OCI-LY7 (cell line): ENCODE measurements at regions of chr16 and their contacts with region 1.

Region 1: DNA sequence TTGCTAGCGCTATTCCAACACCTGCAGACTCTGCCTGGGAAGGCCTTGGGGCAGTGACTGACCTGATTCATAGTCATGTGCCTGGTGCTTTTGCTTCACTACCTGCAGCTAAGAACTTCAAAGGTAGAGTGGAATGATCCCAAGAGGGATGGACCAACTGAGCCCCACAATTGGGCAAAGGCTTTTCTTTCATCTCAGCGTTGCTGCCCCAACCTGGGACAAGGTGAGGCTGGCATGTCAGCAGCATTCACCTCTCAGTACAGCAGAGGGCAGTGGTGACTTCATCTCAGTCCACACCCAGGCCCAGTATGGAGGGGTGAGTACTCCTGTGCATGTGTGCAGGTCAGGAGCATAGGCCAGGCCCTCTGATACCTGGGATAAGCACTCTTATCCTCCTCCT is 149.6 kb upstream of the GNAO1 start:
- DNase-seq: peak; percentile 10
- H3K4me3 ChIP-seq: no peak overlapping the region
- H3K27ac ChIP-seq: no peak overlapping the region
- H3K4me1 ChIP-seq: no peaks in the 10 kb centered on the region
- CTCF ChIP-seq: peak; percentile 66

Region 2: GRCh38 chr16:56203052-56203451 is 161.4 kb after region 1 on chr16:
- CTCF ChIA-PET with region 1: no interaction called
- POLR2A ChIA-PET with region 1: no interaction called
- intact Hi-C with region 1: loop called (anchors 5 kb)
- DNase-seq: peak; percentile 32
- H3K4me3 ChIP-seq: no peak overlapping the region
- H3K27ac ChIP-seq: no peak overlapping the region
- H3K4me1 ChIP-seq: no peaks in the 10 kb centered on the region
- CTCF ChIP-seq: peak; percentile 59

Region 3: DNA sequence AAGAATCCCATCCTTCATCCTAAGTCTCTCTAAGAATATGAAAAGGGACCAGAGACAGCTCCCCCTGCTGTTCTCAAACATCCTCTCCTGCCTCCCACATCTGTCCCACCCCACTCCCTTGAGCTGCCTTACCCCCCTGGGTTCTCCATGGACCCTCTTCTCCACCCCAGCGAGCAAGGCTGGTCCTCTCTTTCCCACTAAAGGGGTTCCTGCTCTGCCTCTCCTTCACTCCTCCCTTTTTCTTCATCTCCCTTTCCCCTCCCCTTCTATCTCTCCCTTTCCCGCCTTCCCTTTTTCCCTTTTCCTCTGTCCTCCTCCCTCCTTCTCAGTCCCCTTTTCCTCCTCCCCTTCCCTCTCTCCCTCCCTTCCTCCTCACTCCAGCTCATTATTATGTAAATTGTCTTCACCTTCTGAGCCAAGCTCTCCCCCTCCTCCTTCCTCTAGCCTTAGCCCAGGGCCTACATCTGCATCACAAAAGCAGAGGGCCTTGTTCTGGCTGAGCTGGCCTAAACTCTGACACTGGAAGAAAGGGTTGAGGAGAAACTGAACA is 239.6 kb after region 1 on chr16:
- CTCF ChIA-PET with region 1: no interaction called
- POLR2A ChIA-PET with region 1: no interaction called
- intact Hi-C with region 1: loop called (anchors 10 kb)
- DNase-seq: no peak
- H3K4me3 ChIP-seq: no peak overlapping the region
- H3K27ac ChIP-seq: no peak overlapping the region
- H3K4me1 ChIP-seq: peaks cover 9% of the 10 kb centered on the region
- CTCF ChIP-seq: peak; percentile 60

Region 4: GRCh38 chr16:56317998-56318826 is 276.5 kb after region 1 on chr16:
- CTCF ChIA-PET with region 1: no interaction called
- POLR2A ChIA-PET with region 1: no interaction called
- intact Hi-C with region 1: loop called (anchors 1 kb)
- DNase-seq: peak; percentile 60
- H3K4me3 ChIP-seq: no peak overlapping the region
- H3K27ac ChIP-seq: no peak overlapping the region
- H3K4me1 ChIP-seq: no peaks in the 10 kb centered on the region
- CTCF ChIP-seq: peak; percentile 87